ENCODE measurements at regions of chr16 and their contacts with region 1.

Region 1: DNA sequence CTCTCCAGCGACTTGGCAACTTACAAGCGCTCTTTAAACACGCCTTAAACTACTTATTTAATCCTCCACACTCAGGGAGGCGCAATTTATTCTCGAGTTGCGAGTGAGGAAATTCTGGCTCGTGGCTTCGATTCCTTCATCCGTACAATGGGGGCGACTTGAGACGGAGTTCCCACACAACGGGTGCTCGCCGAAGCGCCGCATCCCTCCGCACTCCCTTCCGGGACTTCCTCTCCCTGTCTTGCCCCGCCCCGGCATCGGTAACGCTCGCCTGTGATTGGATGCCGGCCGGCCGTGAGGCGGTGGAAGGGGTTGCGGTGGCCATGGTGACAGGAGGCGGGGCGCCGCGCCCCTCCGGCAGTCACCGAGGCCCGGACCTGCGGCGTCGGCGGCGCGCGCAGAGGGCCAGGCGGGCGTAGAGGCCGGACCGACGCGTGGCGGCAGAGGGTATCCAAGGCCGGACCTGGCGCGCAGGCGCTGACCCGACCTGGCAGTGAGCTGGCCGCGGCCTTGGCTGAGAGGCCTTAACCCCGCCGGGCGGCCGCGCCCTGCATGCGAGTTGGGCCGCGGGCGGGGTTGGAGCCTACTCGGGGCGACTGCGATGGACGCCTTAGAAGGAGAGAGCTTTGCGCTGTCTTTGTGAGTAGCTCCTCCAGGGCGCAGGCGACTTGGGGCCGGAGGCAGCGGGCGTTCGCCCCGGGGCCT is at the start of gene ARL2BP:
- DNase-seq: peak; percentile 94 to 97 (median 97)
- H3K4me3 ChIP-seq: peak within 1 kb of the TSS; percentile 69
- H3K4me3 Mint-ChIP-seq: peak within 1 kb of the TSS; percentile 90 to 98 (median 96)
- H3K27ac ChIP-seq: peak within 1 kb of the TSS; percentile 76
- H3K27ac Mint-ChIP-seq: peak within 1 kb of the TSS; percentile 91 to 99 (median 97)
- H3K4me1 ChIP-seq: peaks cover 17% of the 10 kb centered on the region
- H3K4me1 Mint-ChIP-seq: peaks cover 15 to 24% (median 19%) of the 10 kb centered on the region in 3 donors
- H3K27me3 ChIP-seq: no peaks in the 10 kb centered on the region
- H3K27me3 Mint-ChIP-seq: no peaks in the 10 kb centered on the region
- total RNA-seq, gene ARL2BP: 29.9 to 30.1 TPM

Region 2: GRCh38 chr16:57194512-57194911 is 50.4 kb before region 1 on chr16:
- CTCF ChIA-PET with region 1: no interaction called
- POLR2A ChIA-PET with region 1: no interaction called
- DNase-seq: no peak
- H3K4me3 ChIP-seq: no peak overlapping the region
- H3K4me3 Mint-ChIP-seq: no peak overlapping the region
- H3K27ac ChIP-seq: no peak overlapping the region
- H3K27ac Mint-ChIP-seq: peak overlapping the region in 2 of 8 donors; percentile 9 to 33
- H3K4me1 ChIP-seq: no peaks in the 10 kb centered on the region
- H3K4me1 Mint-ChIP-seq: peaks cover 34 to 56% (median 50%) of the 10 kb centered on the region in 3 donors
- H3K27me3 ChIP-seq: no peaks in the 10 kb centered on the region
- H3K27me3 Mint-ChIP-seq: no peaks in the 10 kb centered on the region

Region 3: DNA sequence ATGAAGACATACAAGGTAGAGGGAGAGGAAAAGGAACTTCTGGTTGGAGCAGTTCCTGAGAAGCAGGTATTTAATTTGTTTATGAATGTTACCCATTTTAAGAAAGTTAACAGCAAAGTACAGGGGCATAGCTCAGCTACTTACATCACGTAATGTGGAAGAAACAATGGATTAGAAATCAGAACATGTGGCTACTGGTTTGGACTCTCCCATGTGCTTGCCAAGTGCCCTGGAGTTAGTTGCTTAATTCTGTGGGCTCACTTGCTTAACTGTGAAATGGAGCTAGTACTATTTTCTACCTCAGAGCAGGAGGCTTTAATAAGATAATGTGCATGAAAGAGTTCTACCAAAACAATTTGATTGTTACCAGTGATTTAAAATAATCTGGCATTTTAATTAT is 31.5 kb before region 1 on chr16:
- CTCF ChIA-PET with region 1: no interaction called
- POLR2A ChIA-PET with region 1: no interaction called
- DNase-seq: no peak
- H3K4me3 ChIP-seq: no peak overlapping the region
- H3K4me3 Mint-ChIP-seq: no peak overlapping the region
- H3K27ac ChIP-seq: no peak overlapping the region
- H3K27ac Mint-ChIP-seq: no peak overlapping the region
- H3K4me1 ChIP-seq: no peaks in the 10 kb centered on the region
- H3K4me1 Mint-ChIP-seq: no peaks in the 10 kb centered on the region
- H3K27me3 ChIP-seq: no peaks in the 10 kb centered on the region
- H3K27me3 Mint-ChIP-seq: no peaks in the 10 kb centered on the region

Region 4: GRCh38 chr16:57258910-57259480 is 14.1 kb after region 1 on chr16:
- CTCF ChIA-PET with region 1: no interaction called
- POLR2A ChIA-PET with region 1: interaction called, 11 read pairs
- DNase-seq: no peak
- H3K4me3 ChIP-seq: no peak overlapping the region
- H3K4me3 Mint-ChIP-seq: no peak overlapping the region
- H3K27ac ChIP-seq: no peak overlapping the region
- H3K27ac Mint-ChIP-seq: no peak overlapping the region
- H3K4me1 ChIP-seq: peaks cover 11% of the 10 kb centered on the region
- H3K4me1 Mint-ChIP-seq: peaks cover 6 to 14% (median 7%) of the 10 kb centered on the region in 3 donors
- H3K27me3 ChIP-seq: no peaks in the 10 kb centered on the region
- H3K27me3 Mint-ChIP-seq: no peaks in the 10 kb centered on the region